Left colon (tissue), 2 donors: ENCODE measurements at regions of chr12 and their contacts with region 1.

Region 1: DNA sequence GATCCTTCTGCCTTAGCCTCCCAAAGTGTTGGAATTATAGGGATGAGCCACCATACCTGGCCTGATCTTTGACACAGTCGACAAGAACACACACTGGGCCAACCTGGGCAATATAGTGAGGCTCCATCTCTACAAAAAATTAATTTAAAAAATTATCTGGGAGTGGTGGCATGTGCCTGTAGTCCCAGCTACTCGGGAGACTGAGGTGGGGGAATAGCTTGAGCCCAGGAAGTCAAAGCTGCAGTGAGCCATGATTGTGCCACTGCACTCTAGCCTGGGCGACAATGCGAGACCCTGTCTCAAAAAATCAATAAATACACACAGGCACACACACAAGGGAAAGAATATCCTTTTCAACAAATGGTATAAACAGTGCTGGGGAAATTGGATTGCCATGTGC is 6.1 kb upstream of the OS9 start:
- DNase-seq: no peak
- ATAC-seq: no peak

Region 2: GRCh38 chr12:57632694-57633477 is 55.0 kb before region 1 on chr12 and contains the start of gene B4GALNT1:
- intact Hi-C with region 1: loop called in 1 of 2 experiments (anchors 10 kb)
- DNase-seq: peak in 1 of 2 donors; percentile 63
- ATAC-seq: peak; percentile 95
- total RNA-seq, gene B4GALNT1: 0.34 to 0.98 TPM

Region 3: DNA sequence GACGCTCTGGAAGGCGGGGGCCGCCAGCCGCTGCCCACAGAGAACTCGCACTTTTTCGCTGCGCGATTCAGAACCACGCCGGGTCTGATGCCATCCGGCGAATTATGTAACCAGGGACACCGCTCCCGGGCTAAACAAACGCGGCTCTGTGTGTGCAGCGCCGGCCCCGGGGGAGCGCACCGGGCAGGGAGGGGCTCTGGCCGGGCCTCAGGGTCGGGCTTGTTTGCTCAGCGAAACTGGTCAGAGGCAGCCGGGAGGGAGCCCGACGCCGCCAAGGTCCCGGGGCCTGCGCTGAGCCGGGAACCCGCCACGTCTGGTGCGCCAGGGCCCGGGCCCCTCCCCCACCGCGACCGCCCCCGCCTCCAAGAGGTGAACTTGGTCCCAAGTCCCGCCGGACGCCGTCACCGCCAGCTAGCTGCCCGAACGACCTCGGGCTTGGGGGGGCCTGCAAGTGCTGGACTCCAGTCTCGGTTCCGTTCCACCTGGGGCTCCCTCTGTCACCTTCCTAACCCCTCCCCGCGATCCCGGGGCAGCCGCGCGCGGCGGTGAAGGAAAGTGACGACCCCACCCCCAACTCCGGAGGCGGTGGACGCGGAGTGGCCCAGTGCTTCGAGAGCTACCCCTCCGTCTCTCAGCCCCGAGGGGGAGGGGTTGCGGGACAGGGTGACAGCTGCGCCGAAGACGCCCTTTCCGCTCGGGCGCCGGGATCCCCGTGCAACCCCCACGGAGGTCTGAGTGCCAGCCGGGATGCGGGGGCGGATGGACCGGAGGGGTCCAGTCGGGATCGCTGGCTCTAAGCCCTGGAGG is 157.8 kb after region 1 on chr12:
- intact Hi-C with region 1: no loop called
- DNase-seq: peak; percentile 75 to 85
- ATAC-seq: peak; percentile 41